Activated CD8-positive, alpha-beta memory T cell treated with anti-CD3 and anti-CD28 coated beads, Interleukin-2, amount 10 ng/mL, durations not matched to agents 7 days and 5 days (primary cell): ENCODE measurements at regions of chr7 and their contacts with region 1.

Region 1: DNA sequence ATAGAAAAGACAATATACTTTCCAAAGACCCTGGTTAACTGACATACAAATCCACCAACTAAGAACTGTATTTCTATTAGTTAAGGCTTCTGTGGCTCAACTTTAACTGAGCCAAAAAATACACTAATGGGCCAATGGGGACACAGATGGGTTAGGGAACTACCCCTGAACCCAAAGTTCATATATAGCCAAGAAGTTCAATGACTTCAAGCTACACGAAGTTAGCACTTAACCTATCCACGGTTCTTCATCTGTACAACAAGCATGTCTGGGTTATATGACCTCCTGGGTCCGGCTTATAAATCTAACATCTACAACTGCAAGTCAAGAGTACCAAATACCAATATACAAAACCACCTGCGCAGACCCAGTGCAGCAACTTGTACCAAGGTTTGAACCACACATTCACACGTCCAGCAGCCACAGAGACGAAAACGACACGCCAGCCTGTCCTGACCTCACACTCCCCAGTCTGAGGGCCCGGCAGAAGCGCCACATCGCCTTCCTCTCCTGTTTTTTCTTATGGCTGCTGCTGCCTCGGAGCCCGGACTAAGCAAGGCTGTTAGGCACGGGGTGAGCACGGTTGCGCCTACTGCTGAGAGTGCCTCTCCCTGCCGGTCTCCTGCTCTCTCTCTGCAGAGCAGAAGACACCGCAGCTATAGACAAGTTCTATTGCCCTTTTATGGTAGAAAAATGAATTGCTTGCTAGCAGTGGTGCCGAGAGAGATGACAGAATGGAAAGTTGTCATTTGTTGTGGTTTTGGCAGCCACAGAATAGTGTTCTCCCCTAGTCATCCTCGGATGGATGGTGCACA is 86.3 kb downstream of the RNF216 start:
- DNase-seq: peak; percentile 88
- ATAC-seq: peak; percentile 91
- H3K4me3 Mint-ChIP-seq: peak overlapping the region; percentile 45
- H3K27ac Mint-ChIP-seq: peak overlapping the region; percentile 72
- H3K4me1 Mint-ChIP-seq: peaks cover 61% of the 10 kb centered on the region
- H3K27me3 Mint-ChIP-seq: peaks cover 24% of the 10 kb centered on the region

Region 2: GRCh38 chr7:5677538-5678294 is 17.4 kb before region 1 on chr7:
- CTCF ChIA-PET with region 1: interaction called, 11 read pairs
- DNase-seq: peak; percentile 58
- ATAC-seq: peak; percentile 59
- H3K4me3 Mint-ChIP-seq: no peak overlapping the region
- H3K27ac Mint-ChIP-seq: no peak overlapping the region
- H3K4me1 Mint-ChIP-seq: peaks cover 9% of the 10 kb centered on the region
- H3K27me3 Mint-ChIP-seq: no peaks in the 10 kb centered on the region